ENCODE measurements at regions of chr5 and their contacts with region 1.

Region 1: GRCh38 chr5:151174612-151175101 is 17.1 kb upstream of the ANXA6 start:
- DNase-seq: no peak
- H3K4me3 ChIP-seq: peak overlapping the region in 1 of 8 donors; percentile 24
- H3K27ac ChIP-seq: peak overlapping the region in 3 of 8 donors; percentile 31 to 58 (median 53)
- H3K4me1 ChIP-seq: peaks cover 0 to 44% (median 3%) of the 10 kb centered on the region in 6 donors
- H3K27me3 ChIP-seq: no peaks in the 10 kb centered on the region
- CTCF ChIP-seq: no peak
- POLR2A ChIP-seq: no peak

Region 2: DNA sequence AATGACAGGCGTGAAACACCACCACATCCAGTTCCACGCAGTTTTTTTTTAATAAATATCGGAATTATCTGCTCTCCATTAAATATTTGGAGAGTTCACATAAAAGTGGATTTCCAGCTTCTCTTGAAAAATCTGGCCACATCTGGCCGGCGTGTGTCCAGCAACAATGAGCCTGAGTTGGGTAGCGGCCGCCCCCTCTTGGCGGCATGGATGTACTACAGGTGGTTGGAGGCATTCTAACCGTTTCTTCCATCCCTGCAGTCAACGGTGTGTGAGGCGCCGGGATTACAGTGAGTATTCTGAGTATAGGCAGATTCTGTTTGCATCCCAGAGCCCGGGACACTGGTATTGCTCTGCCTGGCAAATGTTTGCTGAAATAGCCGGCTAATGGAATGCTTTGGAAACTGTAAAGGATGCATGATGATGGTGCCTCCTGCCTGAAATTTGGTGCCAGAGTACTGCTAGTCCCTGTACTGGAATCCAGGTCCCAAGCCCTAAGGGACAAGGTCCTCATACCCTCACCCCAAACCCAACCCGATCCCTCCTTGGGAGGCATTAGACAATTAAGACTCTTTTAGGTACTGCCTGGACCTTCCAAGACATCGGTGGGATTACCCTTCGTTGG is 64.7 kb after region 1 on chr5:
- intact Hi-C with region 1: loop called (anchors 10 kb)
- DNase-seq: peak; percentile 93
- H3K4me3 ChIP-seq: peak overlapping the region in 4 of 8 donors; percentile 1 to 53 (median 16)
- H3K27ac ChIP-seq: peak overlapping the region in 2 of 8 donors; percentile 69
- H3K4me1 ChIP-seq: peaks cover 6 to 82% (median 44%) of the 10 kb centered on the region in 6 donors
- H3K27me3 ChIP-seq: no peaks in the 10 kb centered on the region
- CTCF ChIP-seq: peak; percentile 48 to 94 (median 83)
- POLR2A ChIP-seq: no peak